ENCODE measurements at regions of chr4 and their contacts with region 1.

Region 1: DNA sequence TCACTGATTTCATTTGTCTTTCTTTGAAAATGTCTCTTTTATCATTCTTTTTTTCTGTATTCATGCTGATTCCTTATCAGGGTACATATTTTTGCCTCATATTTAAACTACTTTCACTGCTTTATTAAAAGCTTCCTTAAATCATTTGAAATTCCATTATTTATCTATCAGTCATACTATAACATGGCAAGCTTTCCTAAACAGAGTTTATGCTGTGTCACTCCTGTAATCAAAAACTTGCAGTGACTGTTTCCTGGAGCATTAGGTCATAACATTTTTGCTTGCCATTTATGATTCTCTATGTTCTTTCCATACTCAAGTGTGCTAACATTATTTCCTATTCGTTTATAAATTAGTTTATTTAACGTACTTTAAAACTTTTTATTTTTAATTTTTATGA is 203.7 kb downstream of the BMPR1B start:
- DNase-seq: no peak
- H3K4me3 Mint-ChIP-seq: no peak overlapping the region
- H3K27ac Mint-ChIP-seq: no peak overlapping the region
- H3K4me1 Mint-ChIP-seq: no peaks in the 10 kb centered on the region
- H3K27me3 Mint-ChIP-seq: peaks cover 2% of the 10 kb centered on the region

Region 2: GRCh38 chr4:94947681-94948108 is 13.7 kb before region 1 on chr4:
- intact Hi-C with region 1: loop called (anchors 1 kb)
- DNase-seq: no peak
- H3K4me3 Mint-ChIP-seq: no peak overlapping the region
- H3K27ac Mint-ChIP-seq: no peak overlapping the region
- H3K4me1 Mint-ChIP-seq: no peaks in the 10 kb centered on the region
- H3K27me3 Mint-ChIP-seq: no peaks in the 10 kb centered on the region

Region 3: GRCh38 chr4:95077864-95078263 is 116.4 kb after region 1 on chr4:
- intact Hi-C with region 1: no loop called
- DNase-seq: no peak
- H3K4me3 Mint-ChIP-seq: no peak overlapping the region
- H3K27ac Mint-ChIP-seq: no peak overlapping the region
- H3K4me1 Mint-ChIP-seq: no peaks in the 10 kb centered on the region
- H3K27me3 Mint-ChIP-seq: peaks cover 2% of the 10 kb centered on the region

Region 4: DNA sequence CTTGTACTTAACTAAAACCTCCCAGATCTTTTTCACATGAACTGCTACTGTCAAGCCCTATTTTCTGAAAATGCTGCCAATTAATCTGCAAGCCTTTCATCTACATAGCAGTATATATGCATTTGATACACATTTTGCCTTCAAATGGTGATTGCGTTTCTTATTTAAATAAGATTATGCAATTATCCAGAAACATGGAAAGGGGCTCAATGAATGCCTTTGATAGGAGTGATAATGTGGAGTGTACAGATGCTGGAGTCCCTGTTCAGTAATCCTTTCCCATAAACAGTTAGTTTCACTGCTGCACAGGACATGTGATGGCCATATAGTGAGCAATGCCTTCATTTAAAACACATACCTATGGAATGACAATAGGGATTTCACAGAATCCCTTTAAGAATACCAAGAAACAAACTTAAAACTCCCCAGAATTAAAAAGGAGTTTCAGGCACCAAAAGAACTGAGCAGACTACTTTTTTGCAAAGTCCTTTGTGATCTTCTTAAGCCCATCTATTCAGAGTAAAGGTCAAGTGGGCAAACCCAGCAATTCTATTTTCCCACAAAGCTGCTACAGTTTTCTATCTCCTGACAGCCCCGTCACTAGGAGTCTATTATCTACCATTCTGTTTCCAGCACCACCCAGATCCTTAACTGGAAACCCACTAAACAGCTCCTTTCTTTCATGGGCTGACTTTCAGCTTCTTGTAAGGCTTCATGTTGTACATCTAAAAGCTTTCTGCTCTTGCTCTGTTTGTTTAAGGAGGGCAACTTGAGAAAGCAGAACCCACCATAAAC is 467.1 kb after region 1 on chr4:
- intact Hi-C with region 1: no loop called
- DNase-seq: no peak
- H3K4me3 Mint-ChIP-seq: no peak overlapping the region
- H3K27ac Mint-ChIP-seq: no peak overlapping the region
- H3K4me1 Mint-ChIP-seq: no peaks in the 10 kb centered on the region
- H3K27me3 Mint-ChIP-seq: no peaks in the 10 kb centered on the region

Measured in activated T-helper 1 cell treated with anti-CD3 and anti-CD28 coated beads, Interleukin-12 subunit alpha, Interleukin-12 subunit beta, Interleukin-2, Interleukin-4 antibody, amounts not matched to agents 30 ng/mL and 10 ng/mL and 1 ng/mL, durations not matched to agents 14 hours and 24 hours and 36 hours (primary cell).